ENCODE measurements at regions of chr3 and their contacts with region 1.

Region 1: GRCh38 chr3:112642912-112643506 is 2.1 kb upstream of the CCDC80 start:
- DNase-seq: peak; percentile 89
- H3K4me3 Mint-ChIP-seq: peak overlapping the region; percentile 25
- H3K27ac Mint-ChIP-seq: peak overlapping the region; percentile 62
- H3K4me1 Mint-ChIP-seq: peaks cover 21% of the 10 kb centered on the region
- H3K27me3 Mint-ChIP-seq: peaks cover 4% of the 10 kb centered on the region

Region 2: GRCh38 chr3:112627419-112627818 is 15.6 kb before region 1 on chr3:
- CTCF ChIA-PET with region 1: interaction called, 28 read pairs
- POLR2A ChIA-PET with region 1: no interaction called
- DNase-seq: no peak
- H3K4me3 Mint-ChIP-seq: no peak overlapping the region
- H3K27ac Mint-ChIP-seq: no peak overlapping the region
- H3K4me1 Mint-ChIP-seq: no peaks in the 10 kb centered on the region
- H3K27me3 Mint-ChIP-seq: peaks cover 10% of the 10 kb centered on the region

Region 3: GRCh38 chr3:112653209-112653871 is 10.3 kb after region 1 on chr3:
- CTCF ChIA-PET with region 1: interaction called, 12 read pairs
- POLR2A ChIA-PET with region 1: no interaction called
- DNase-seq: no peak
- H3K4me3 Mint-ChIP-seq: no peak overlapping the region
- H3K27ac Mint-ChIP-seq: no peak overlapping the region
- H3K4me1 Mint-ChIP-seq: peaks cover 20% of the 10 kb centered on the region
- H3K27me3 Mint-ChIP-seq: peaks cover 5% of the 10 kb centered on the region

Region 4: GRCh38 chr3:112979240-112979832 is 336.3 kb after region 1 on chr3:
- CTCF ChIA-PET with region 1: interaction called, 16 read pairs
- POLR2A ChIA-PET with region 1: no interaction called
- DNase-seq: peak; percentile 55
- H3K4me3 Mint-ChIP-seq: no peak overlapping the region
- H3K27ac Mint-ChIP-seq: no peak overlapping the region
- H3K4me1 Mint-ChIP-seq: peaks cover 57% of the 10 kb centered on the region
- H3K27me3 Mint-ChIP-seq: no peaks in the 10 kb centered on the region

Measured in activated CD4-positive, alpha-beta T cell treated with anti-CD3 and anti-CD28 coated beads, Interleukin-2, amount 10 ng/mL, durations not matched to agents 7 days and 5 days (primary cell).